ENCODE measurements at regions of chr21 and their contacts with region 1.

Region 1: GRCh38 chr21:34888569-34889319 is 160.4 kb downstream of the RUNX1 start:
- DNase-seq: peak; percentile 95
- H3K4me3 Mint-ChIP-seq: peak overlapping the region; percentile 96
- H3K27ac Mint-ChIP-seq: peak overlapping the region; percentile 99
- H3K4me1 Mint-ChIP-seq: peaks cover 34% of the 10 kb centered on the region
- H3K27me3 Mint-ChIP-seq: peaks cover 2% of the 10 kb centered on the region

Region 2: DNA sequence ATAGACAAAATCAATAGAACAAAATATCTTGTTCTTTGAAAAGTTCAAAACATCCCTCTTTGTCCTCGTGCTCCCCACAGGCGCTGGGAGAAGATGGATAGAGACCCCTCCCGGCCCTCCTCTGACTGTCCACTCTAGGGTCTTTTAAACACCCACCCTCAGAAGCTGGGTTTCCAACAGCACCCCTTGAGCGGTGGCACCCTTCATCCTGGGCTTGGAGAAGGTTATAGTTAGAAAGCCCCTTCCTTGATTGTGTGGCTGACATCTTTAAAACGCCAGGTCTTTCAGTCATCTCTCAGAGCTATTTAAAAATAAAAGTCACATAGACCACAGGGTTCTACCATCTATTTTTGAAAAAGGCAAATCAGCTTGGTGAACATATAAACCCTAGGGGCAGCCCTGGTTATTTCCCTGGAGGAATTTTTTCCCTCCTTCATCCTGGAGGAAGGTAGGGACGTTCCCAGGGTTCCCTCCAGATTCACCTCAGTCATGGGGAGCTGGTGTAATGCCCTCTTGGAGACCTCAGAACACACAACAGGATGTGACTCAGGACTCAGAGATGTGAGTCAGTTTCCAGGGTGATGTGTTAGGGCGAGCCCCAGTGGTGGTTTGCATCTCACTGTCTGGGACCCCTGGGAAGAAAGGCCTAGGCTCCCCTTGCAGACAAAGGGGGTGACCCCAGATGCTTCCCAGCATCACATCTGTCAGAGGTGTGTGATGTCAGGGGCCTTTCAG is 81.4 kb before region 1 on chr21:
- intact Hi-C with region 1: loop called (anchors 2 kb)
- DNase-seq: peak; percentile 84
- H3K4me3 Mint-ChIP-seq: peak overlapping the region; percentile 57
- H3K27ac Mint-ChIP-seq: peak overlapping the region; percentile 94
- H3K4me1 Mint-ChIP-seq: peaks cover 66% of the 10 kb centered on the region
- H3K27me3 Mint-ChIP-seq: no peaks in the 10 kb centered on the region

Region 3: DNA sequence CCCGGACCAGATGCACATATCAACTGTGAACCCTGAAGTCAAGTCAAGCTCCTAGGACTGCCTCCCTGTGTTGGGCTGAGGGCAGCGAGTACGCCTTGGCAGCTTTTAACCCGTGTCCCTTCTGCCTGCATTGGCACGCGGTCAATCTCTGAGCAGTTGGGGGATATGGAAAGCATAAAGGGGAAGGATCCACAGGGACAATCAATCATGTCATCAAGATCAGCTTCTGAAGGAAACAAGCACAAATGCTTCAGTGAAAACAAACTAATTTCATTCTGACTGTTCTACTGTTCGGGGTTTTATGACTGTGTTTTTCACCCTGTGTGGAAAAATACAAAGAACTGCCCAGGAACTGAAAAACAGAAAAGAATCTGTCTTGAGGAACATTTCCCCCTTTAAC is 54.2 kb after region 1 on chr21:
- intact Hi-C with region 1: loop called (anchors 1 kb)
- DNase-seq: no peak
- H3K4me3 Mint-ChIP-seq: peak overlapping the region; percentile 47
- H3K27ac Mint-ChIP-seq: peak overlapping the region; percentile 94
- H3K4me1 Mint-ChIP-seq: peaks cover 75% of the 10 kb centered on the region
- H3K27me3 Mint-ChIP-seq: no peaks in the 10 kb centered on the region

Region 4: GRCh38 chr21:35026617-35027562 is 138.1 kb after region 1 on chr21:
- intact Hi-C with region 1: loop called (anchors 1 kb)
- DNase-seq: peak; percentile 96
- H3K4me3 Mint-ChIP-seq: peak overlapping the region; percentile 81
- H3K27ac Mint-ChIP-seq: peak overlapping the region; percentile 99
- H3K4me1 Mint-ChIP-seq: peaks cover 73% of the 10 kb centered on the region
- H3K27me3 Mint-ChIP-seq: no peaks in the 10 kb centered on the region

Region 5: DNA sequence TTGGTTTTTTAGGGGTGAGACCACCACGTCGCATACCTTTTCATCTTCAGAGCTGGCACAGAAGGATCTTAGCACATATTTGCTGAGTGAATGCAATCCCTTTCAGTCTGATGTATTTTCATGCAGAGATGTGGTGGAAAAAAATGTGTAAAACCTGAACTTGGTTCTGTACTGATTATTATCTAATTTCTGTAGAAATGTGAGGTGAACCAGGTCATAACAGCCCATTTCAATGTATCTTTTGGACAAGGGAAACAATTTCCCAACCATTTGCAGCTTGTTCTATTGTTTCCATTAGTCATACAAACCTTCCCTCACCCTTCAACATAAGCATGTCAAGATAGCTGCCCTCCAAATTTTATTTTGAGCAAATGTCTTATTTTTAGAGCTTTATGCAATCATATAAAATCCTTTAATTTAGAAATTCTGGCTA is 207.1 kb after region 1 on chr21:
- intact Hi-C with region 1: loop called (anchors 1 kb)
- DNase-seq: no peak
- H3K4me3 Mint-ChIP-seq: no peak overlapping the region
- H3K27ac Mint-ChIP-seq: peak overlapping the region; percentile 92
- H3K4me1 Mint-ChIP-seq: peaks cover 29% of the 10 kb centered on the region
- H3K27me3 Mint-ChIP-seq: no peaks in the 10 kb centered on the region

Region 6: DNA sequence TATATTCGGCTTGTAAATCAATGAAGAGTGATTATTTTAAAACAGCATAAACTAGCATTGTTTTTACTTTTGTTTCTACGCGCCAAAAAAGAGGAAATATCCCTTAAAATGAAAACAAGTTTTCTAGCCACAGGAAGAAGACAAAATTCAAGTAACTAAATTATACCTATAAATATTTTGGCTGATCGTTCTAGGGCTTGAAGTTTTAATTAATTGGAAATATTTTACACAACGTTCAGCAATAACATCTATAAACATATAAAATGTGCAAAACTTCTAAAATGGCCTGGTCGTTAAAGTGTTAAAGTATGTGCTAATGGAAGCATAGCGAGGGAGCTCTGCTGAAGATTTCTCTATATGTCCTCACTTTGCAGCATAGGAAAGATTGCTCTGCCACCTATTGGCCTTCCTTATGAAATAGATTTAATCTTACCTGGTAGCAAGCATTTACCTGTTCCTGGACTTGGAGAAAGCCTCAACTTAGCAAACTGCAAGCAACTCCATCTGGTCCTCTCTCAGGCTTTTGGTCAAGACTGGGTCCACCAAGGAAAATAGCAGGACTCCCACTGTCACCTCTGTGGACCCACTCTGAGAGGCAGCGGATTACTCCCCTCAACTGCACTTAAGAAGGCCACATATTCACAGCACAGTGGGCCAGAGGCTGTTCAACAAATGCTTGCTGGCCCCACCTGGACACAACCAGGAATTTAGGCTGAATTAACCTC is 511.7 kb after region 1 on chr21:
- intact Hi-C with region 1: loop called (anchors 1 kb)
- DNase-seq: peak; percentile 81
- H3K4me3 Mint-ChIP-seq: no peak overlapping the region
- H3K27ac Mint-ChIP-seq: no peak overlapping the region
- H3K4me1 Mint-ChIP-seq: peaks cover 28% of the 10 kb centered on the region
- H3K27me3 Mint-ChIP-seq: peaks cover 9% of the 10 kb centered on the region

Region 7: GRCh38 chr21:35840197-35840799 is 951.6 kb after region 1 on chr21:
- intact Hi-C with region 1: loop called (anchors 5 kb)
- DNase-seq: peak; percentile 84
- H3K4me3 Mint-ChIP-seq: no peak overlapping the region
- H3K27ac Mint-ChIP-seq: no peak overlapping the region
- H3K4me1 Mint-ChIP-seq: no peaks in the 10 kb centered on the region
- H3K27me3 Mint-ChIP-seq: peaks cover 2% of the 10 kb centered on the region

Measured in activated CD4-positive, alpha-beta T cell treated with anti-CD3 and anti-CD28 coated beads, Interleukin-2, amount 10 ng/mL, durations not matched to agents 24 days and 14 days (primary cell).